Keratinocyte (primary cell): ENCODE measurements at regions of chr2 and their contacts with region 1.

Region 1: GRCh38 chr2:71299507-71299906 is 32.1 kb upstream of the ZNF638 start:
- DNase-seq: no peak
- H3K4me3 ChIP-seq: no peak overlapping the region
- H3K27ac ChIP-seq: no peak overlapping the region
- H3K4me1 ChIP-seq: peaks cover 12% of the 10 kb centered on the region
- H3K27me3 ChIP-seq: no peaks in the 10 kb centered on the region
- CTCF ChIP-seq: peak in 2 of 3 experiments; percentile 41 to 61

Region 2: GRCh38 chr2:71226965-71227560 is 72.4 kb before region 1 on chr2 and contains the start of gene PAIP2B:
- dilution Hi-C with region 1: loop called (anchors 10 kb)
- DNase-seq: peak; percentile 95
- H3K4me3 ChIP-seq: peak within 1 kb of the TSS; percentile 68 to 88 (median 72)
- H3K27ac ChIP-seq: peak within 1 kb of the TSS; percentile 25
- H3K4me1 ChIP-seq: peaks cover 6% of the 10 kb centered on the region
- H3K27me3 ChIP-seq: no peaks in the 10 kb centered on the region
- CTCF ChIP-seq: no peak
- polyA plus RNA-seq, gene PAIP2B: 0.99 to 1.7 TPM (median 1.4 TPM) in 3 replicates

Region 3: GRCh38 chr2:71348302-71348701 is 48.8 kb after region 1 on chr2:
- dilution Hi-C with region 1: no loop called
- DNase-seq: no peak
- H3K4me3 ChIP-seq: no peak overlapping the region
- H3K27ac ChIP-seq: no peak overlapping the region
- H3K4me1 ChIP-seq: no peaks in the 10 kb centered on the region
- H3K27me3 ChIP-seq: no peaks in the 10 kb centered on the region
- CTCF ChIP-seq: no peak